Common myeloid progenitor, CD34-positive (primary cell): ENCODE measurements at regions of chr1 and their contacts with region 1.

Region 1: DNA sequence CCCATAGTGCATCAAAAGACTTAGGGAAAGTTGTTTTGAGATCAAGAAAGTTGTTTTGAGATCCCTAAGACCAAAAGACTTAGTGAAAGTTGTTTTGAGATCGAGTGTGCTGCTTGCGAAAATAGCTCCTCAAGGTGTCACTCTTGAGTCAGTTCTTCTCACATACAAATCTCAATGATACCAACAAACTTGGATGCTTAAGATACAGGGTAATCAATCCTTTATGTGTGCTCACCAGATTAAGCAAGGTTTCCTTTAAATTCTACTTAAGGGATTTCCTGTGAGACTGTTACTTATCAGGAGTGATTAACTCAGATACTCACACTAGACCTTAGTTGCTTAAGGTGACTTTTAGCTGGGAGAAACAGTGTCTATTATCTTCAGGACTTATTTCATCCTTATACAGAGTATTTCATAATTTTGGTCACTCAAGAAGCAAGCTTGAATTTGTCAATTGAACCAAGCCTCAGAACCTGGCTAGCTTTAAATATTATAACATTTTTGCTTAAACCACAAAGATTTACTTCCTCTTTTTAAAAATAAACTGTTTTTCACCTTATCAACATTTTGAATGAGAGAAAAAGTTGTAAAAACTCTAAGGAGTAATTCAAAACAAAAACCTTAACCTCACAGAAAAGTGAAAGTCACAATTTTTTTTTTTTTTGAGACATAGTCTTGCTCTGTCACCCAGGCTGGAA is 8.0 kb upstream of the RLF start:
- DNase-seq: peak; percentile 89 to 90 (median 90)
- H3K4me3 ChIP-seq: peak overlapping the region in 6 of 7 experiments; percentile 6 to 77 (median 44)
- H3K27ac ChIP-seq: peak overlapping the region; percentile 35 to 80
- H3K4me1 ChIP-seq: peaks cover 12 to 28% (median 27%) of the 10 kb centered on the region in 4 experiments
- H3K27me3 ChIP-seq: no peaks in the 10 kb centered on the region

Region 2: DNA sequence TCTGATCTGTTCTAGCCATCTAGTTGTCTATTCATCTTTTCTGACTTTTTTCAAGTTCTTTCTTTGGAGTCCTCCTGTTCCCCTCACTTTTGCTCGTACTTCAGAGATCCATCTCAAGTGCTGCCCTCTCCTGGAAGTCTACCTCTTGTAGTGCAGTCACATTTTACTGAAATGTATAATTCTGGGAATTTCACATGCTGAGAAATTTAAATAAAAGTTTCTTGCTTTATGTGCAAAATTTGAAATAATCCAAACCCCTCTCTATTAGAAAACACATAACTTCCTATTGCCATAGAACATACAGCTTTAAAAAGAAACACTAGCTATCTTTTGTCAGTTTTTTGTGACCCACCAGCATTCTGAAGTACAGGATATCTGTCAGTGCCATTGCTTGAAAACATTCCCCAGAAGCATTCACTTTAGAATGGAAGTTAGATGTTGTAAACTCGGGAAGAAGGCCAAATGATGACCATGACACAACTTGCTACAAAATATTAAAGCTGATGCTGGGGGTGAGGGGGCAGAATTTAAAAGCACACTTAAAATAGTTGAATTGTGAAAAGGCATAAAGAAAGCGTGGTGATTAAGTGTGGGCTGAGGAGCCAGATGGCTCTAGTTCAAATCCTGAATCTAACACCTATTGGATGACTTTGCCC is 30.0 kb after region 1 on chr1:
- CTCF ChIA-PET with region 1: interaction called, 81 read pairs
- POLR2A ChIA-PET with region 1: interaction called, 4 read pairs
- DNase-seq: peak; percentile 67 to 79 (median 77)
- H3K4me3 ChIP-seq: no peak overlapping the region
- H3K27ac ChIP-seq: no peak overlapping the region
- H3K4me1 ChIP-seq: peaks cover 0 to 3% (median 3%) of the 10 kb centered on the region in 4 experiments
- H3K27me3 ChIP-seq: no peaks in the 10 kb centered on the region

Region 3: GRCh38 chr1:40197656-40198055 is 44.4 kb after region 1 on chr1:
- CTCF ChIA-PET with region 1: interaction called, 34 read pairs
- POLR2A ChIA-PET with region 1: interaction called, 3 read pairs
- DNase-seq: peak; percentile 8 to 35 (median 27)
- H3K4me3 ChIP-seq: no peak overlapping the region
- H3K27ac ChIP-seq: no peak overlapping the region
- H3K4me1 ChIP-seq: no peaks in the 10 kb centered on the region
- H3K27me3 ChIP-seq: no peaks in the 10 kb centered on the region

Region 4: DNA sequence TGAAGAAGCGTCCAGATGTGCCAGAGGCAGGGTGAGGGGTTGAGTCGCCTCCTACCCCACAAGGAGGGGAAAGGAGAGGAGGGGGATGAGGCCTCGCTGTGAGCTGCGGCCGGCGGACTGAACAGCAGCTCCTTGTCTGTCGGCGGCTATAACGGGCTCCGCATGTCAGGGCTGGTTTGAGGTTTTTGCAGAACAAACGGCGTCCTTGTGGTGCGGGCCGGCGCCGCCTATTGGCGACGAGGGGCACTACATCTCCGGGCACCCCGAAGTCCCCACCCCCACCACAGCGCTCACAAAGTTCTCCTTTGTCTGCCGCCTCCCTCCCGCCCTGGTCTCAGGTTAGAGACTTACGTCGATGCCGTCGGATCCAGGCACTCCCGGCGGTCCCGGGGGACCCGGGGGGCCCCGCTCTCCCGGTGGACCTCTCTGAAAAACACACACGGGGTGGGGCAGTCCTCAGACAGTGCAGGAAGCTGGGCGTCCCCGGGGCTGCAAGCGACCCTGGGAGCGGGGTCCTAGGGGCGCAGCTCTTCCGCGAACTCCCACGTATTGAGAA is 162.1 kb after region 1 on chr1:
- CTCF ChIA-PET with region 1: interaction called, 31 read pairs
- POLR2A ChIA-PET with region 1: interaction called, 5 read pairs
- DNase-seq: peak; percentile 88 to 96 (median 95)
- H3K4me3 ChIP-seq: peak overlapping the region; percentile 42 to 77 (median 60)
- H3K27ac ChIP-seq: no peak overlapping the region
- H3K4me1 ChIP-seq: peaks cover 0 to 43% (median 43%) of the 10 kb centered on the region in 4 experiments
- H3K27me3 ChIP-seq: peaks cover 5 to 35% (median 19%) of the 10 kb centered on the region in 5 experiments

Region 5: GRCh38 chr1:40338745-40339424 is 185.7 kb after region 1 on chr1:
- CTCF ChIA-PET with region 1: interaction called, 56 read pairs
- POLR2A ChIA-PET with region 1: interaction called, 4 read pairs
- DNase-seq: peak; percentile 84 to 92 (median 89)
- H3K4me3 ChIP-seq: peak overlapping the region in 2 of 7 experiments; percentile 52 to 55
- H3K27ac ChIP-seq: no peak overlapping the region
- H3K4me1 ChIP-seq: peaks cover 0 to 21% (median 8%) of the 10 kb centered on the region in 4 experiments
- H3K27me3 ChIP-seq: no peaks in the 10 kb centered on the region

Region 6: GRCh38 chr1:40404670-40405462 is 251.6 kb after region 1 on chr1:
- CTCF ChIA-PET with region 1: interaction called, 17 read pairs
- POLR2A ChIA-PET with region 1: no interaction called
- DNase-seq: peak; percentile 77 to 86 (median 82)
- H3K4me3 ChIP-seq: peak overlapping the region in 1 of 7 experiments; percentile 54
- H3K27ac ChIP-seq: no peak overlapping the region
- H3K4me1 ChIP-seq: peaks cover 3 to 20% (median 16%) of the 10 kb centered on the region in 4 experiments
- H3K27me3 ChIP-seq: no peaks in the 10 kb centered on the region

Region 7: DNA sequence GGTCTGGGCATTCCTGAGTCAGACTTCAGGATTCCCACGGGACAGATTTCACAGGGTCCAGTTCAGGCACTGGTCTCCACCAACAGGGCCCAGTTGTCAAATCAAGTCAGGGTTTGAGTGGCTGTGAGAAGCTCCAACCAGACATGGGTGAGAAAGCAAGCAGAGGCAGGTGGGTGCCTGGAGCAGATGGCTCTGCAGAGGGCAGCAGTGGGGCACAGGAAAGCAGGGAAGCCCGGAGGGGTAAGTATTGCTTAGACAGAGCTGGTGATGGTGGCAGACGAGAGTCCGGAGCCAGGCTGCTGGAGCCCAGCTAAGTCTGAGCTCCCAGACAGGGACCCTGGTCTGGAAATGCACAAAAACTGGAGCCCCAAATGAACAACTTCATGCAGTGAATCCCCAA is 471.8 kb after region 1 on chr1:
- CTCF ChIA-PET with region 1: no interaction called
- POLR2A ChIA-PET with region 1: no interaction called
- DNase-seq: peak; percentile 36 to 60 (median 58)
- H3K4me3 ChIP-seq: no peak overlapping the region
- H3K27ac ChIP-seq: no peak overlapping the region
- H3K4me1 ChIP-seq: peaks cover 0 to 22% (median 12%) of the 10 kb centered on the region in 4 experiments
- H3K27me3 ChIP-seq: peaks cover 0 to 2% (median 0%) of the 10 kb centered on the region in 5 experiments